HCT116 (cell line): ENCODE measurements at regions of chr1 and their contacts with region 1.

Region 1: DNA sequence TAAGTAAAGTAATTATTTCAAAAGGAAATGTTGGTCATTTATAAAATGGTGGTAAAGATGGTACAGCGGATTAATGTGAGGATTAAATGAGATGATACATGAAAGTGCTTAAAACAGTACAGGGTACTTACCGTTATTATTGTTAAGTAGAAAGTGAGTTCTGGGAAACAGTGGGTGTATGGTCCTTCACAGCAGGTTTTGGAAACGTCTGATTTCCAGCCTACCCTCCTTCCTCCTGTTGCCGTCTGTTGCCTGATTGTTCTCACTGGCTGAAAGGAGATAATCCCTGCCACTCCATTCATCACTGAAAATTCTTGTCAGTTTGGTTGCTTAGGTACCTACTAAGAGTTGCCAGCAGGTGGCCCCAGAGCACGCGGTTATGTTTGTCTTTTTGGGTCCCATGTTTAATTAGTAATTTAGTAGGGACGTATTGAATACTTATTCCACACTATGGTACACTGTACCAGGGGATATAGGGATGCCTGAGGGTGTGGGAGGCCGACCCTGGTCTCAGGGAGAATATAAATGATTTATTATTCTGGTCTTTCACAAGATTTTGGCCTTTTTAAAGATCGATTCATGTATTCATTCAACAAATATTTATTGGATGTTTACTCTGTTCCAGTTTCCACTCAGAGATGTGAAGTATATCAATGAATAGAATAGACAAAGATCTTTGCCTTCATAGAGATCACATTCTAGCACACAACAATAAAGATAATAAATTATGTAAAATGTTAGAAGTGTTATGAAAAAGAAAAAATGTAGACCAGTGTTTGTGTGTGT is 30.8 kb upstream of the RPTN start:
- DNase-seq: peak; percentile 63
- ATAC-seq: peak; percentile 66
- H3K4me3 ChIP-seq: no peak overlapping the region
- H3K27ac ChIP-seq: no peak overlapping the region
- H3K4me1 ChIP-seq: no peaks in the 10 kb centered on the region
- H3K27me3 ChIP-seq: peaks cover 6% of the 10 kb centered on the region; the same call in 1 of the 2 replicates
- CTCF ChIP-seq: peak; percentile 67 to 83 (median 82)
- POLR2A ChIP-seq: no peak
- RAD21 ChIP-seq: peak; percentile 88

Region 2: DNA sequence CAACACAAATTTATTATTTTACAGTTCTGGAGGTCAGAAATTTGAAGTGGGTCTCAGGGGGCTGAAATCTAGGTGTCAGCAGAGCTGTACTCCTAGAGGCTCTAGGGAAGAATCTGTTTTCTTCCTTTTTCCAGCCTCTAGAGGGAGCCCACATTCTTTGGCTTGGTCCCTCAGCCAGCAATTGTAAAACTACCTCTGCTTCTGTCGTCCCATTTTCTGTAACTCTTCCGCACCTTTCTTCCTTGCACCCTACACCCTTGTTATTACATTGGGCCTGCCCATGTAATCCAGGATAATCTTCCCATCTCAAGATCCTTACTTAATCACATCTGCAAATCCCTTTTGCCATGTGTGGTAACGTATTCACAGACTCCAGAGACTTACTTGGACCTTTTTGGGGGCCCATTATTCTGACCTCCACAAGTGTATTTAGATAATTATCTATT is 255.8 kb before region 1 on chr1:
- CTCF ChIA-PET with region 1: interaction called, 4 read pairs
- POLR2A ChIA-PET with region 1: no interaction called
- RAD21 ChIA-PET with region 1: no interaction called
- intact Hi-C with region 1: loop called (anchors 5 kb)
- DNase-seq: no peak
- ATAC-seq: peak; percentile 97
- H3K4me3 ChIP-seq: no peak overlapping the region
- H3K27ac ChIP-seq: no peak overlapping the region
- H3K4me1 ChIP-seq: no peaks in the 10 kb centered on the region; a peak in 1 of 4 replicates
- H3K27me3 ChIP-seq: no peaks in the 10 kb centered on the region
- CTCF ChIP-seq: peak; percentile 86 to 95 (median 86)
- POLR2A ChIP-seq: no peak
- RAD21 ChIP-seq: peak; percentile 96

Region 3: GRCh38 chr1:152141974-152142584 is 47.8 kb before region 1 on chr1:
- CTCF ChIA-PET with region 1: interaction called, 56 read pairs
- POLR2A ChIA-PET with region 1: no interaction called
- RAD21 ChIA-PET with region 1: interaction called in 1 of 2 experiments, 5 read pairs
- intact Hi-C with region 1: loop called (anchors 1 kb)
- DNase-seq: peak; percentile 63
- ATAC-seq: peak; percentile 91
- H3K4me3 ChIP-seq: no peak overlapping the region
- H3K27ac ChIP-seq: no peak overlapping the region
- H3K4me1 ChIP-seq: no peaks in the 10 kb centered on the region
- H3K27me3 ChIP-seq: peaks cover 26% of the 10 kb centered on the region
- CTCF ChIP-seq: peak; percentile 80 to 94 (median 93)
- POLR2A ChIP-seq: no peak
- RAD21 ChIP-seq: peak; percentile 97

Region 4: DNA sequence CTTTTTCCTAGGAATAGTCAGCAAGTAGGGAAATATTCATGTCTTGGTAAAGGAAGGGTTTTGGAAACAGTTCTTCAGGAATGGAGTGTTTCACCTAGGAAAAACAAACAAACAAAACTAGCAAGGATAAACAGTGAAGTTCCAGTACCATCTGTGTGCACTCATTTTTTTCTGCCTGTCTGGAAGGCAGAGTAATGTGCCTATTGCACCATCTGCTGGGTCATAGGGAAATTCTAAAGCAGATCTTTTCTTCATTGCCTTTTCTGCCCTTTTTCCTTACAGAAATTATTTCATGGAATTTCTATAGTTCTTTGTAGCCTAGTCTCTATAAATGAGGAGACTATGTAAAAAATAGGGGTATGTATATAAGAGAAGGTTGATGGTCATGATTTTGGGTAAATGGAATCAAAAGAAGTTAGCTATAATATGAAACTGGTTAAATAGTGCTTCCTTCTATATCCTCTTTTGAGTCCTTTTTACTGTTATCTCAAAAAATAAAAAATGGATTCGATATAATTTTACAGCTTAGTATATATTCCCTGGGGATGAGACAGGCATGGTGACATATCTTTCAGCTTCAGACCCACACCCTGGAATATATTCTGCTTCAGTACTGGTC is 37.6 kb after region 1 on chr1:
- CTCF ChIA-PET with region 1: no interaction called
- POLR2A ChIA-PET with region 1: no interaction called
- RAD21 ChIA-PET with region 1: no interaction called
- intact Hi-C with region 1: loop called (anchors 1 kb)
- DNase-seq: no peak
- ATAC-seq: no peak
- H3K4me3 ChIP-seq: no peak overlapping the region
- H3K27ac ChIP-seq: no peak overlapping the region
- H3K4me1 ChIP-seq: no peaks in the 10 kb centered on the region
- H3K27me3 ChIP-seq: peaks cover 60% of the 10 kb centered on the region
- CTCF ChIP-seq: peak in 2 of 3 experiments; percentile 24 to 25; a peak in 1 of 6 replicates
- POLR2A ChIP-seq: no peak
- RAD21 ChIP-seq: peak; percentile 48; the same call in 1 of the 2 replicates

Region 5: GRCh38 chr1:152440635-152441471 is 251.0 kb after region 1 on chr1:
- CTCF ChIA-PET with region 1: interaction called, 15 read pairs
- POLR2A ChIA-PET with region 1: no interaction called
- RAD21 ChIA-PET with region 1: no interaction called
- intact Hi-C with region 1: no loop called
- DNase-seq: peak; percentile 63
- ATAC-seq: peak; percentile 99
- H3K4me3 ChIP-seq: no peak overlapping the region
- H3K27ac ChIP-seq: no peak overlapping the region
- H3K4me1 ChIP-seq: peaks cover 0 to 14% of the 10 kb centered on the region in 2 experiments; a peak in 2 of 4 replicates
- H3K27me3 ChIP-seq: peaks cover 6% of the 10 kb centered on the region; the same call in 1 of the 2 replicates
- CTCF ChIP-seq: peak; percentile 85 to 93 (median 92)
- POLR2A ChIP-seq: no peak
- RAD21 ChIP-seq: peak; percentile 83

Region 6: GRCh38 chr1:152626744-152627143 is 436.9 kb after region 1 on chr1:
- CTCF ChIA-PET with region 1: no interaction called
- POLR2A ChIA-PET with region 1: no interaction called
- RAD21 ChIA-PET with region 1: no interaction called
- intact Hi-C with region 1: no loop called
- DNase-seq: no peak
- ATAC-seq: no peak
- H3K4me3 ChIP-seq: no peak overlapping the region
- H3K27ac ChIP-seq: no peak overlapping the region
- H3K4me1 ChIP-seq: no peaks in the 10 kb centered on the region
- H3K27me3 ChIP-seq: peaks cover 21% of the 10 kb centered on the region; the same call in 1 of the 2 replicates
- CTCF ChIP-seq: no peak
- POLR2A ChIP-seq: no peak
- RAD21 ChIP-seq: no peak